A673 (cell line): ENCODE measurements at regions of chr5 and their contacts with region 1.

Region 1: GRCh38 chr5:77957931-77958521 is 181.9 kb upstream of the TBCA start:
- DNase-seq: peak; percentile 95
- H3K4me3 ChIP-seq: no peak overlapping the region
- H3K27ac ChIP-seq: no peak overlapping the region
- H3K4me1 ChIP-seq: peaks cover 12% of the 10 kb centered on the region
- H3K27me3 ChIP-seq: peaks cover 99% of the 10 kb centered on the region
- CTCF ChIP-seq: no peak

Region 2: GRCh38 chr5:77630258-77631089 is 327.6 kb before region 1 on chr5:
- CTCF ChIA-PET with region 1: no interaction called
- POLR2A ChIA-PET with region 1: no interaction called
- intact Hi-C with region 1: loop called (anchors 10 kb)
- DNase-seq: peak; percentile 69
- H3K4me3 ChIP-seq: peak overlapping the region; percentile 47
- H3K27ac ChIP-seq: no peak overlapping the region
- H3K4me1 ChIP-seq: peaks cover 3% of the 10 kb centered on the region
- H3K27me3 ChIP-seq: peaks cover 99% of the 10 kb centered on the region
- CTCF ChIP-seq: peak; percentile 38; the same call in 1 of the 2 replicates

Region 3: GRCh38 chr5:77718934-77719610 is 239.0 kb before region 1 on chr5:
- CTCF ChIA-PET with region 1: no interaction called
- POLR2A ChIA-PET with region 1: no interaction called
- intact Hi-C with region 1: no loop called
- DNase-seq: no peak
- H3K4me3 ChIP-seq: no peak overlapping the region
- H3K27ac ChIP-seq: no peak overlapping the region
- H3K4me1 ChIP-seq: peaks cover 4% of the 10 kb centered on the region
- H3K27me3 ChIP-seq: no peaks in the 10 kb centered on the region
- CTCF ChIP-seq: no peak

Region 4: DNA sequence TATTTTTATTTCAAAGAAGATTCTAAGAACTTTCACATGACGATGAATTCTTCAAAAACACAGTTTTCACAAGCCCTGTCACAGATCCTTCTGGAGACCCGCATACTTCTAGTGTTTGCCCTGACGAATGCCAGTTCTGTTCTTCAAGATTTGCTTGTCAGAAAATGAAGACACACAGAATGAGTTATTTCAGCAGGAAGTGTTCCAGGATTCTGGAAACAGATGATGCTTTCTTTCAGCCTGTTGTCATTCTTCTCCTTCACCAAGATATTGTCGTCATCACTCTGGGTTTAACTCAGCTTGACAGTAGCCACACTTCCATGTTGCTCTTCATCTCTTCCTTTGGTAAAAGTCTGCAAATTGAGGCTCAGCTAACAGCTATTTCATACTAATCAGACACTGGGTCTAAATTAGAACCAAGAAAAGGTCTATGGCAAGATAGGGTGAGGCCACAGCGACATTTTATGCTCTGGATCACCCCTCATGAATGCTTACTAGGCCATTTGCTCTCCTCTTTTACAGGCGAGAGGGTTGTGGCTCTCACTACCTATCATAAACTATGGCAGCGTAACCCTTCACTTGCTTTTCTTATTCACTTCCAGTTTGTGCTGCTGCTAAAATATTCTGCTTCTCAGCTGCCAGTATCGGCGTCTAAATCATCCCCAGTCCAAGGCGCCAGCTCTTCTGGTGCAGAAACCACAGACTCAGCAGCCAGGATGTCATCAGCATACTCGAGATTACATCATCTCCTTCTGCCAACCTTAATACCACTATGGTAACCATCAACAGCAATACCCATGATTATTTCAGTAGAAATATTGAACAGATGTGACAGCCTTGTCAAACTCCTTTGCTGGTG is 22.3 kb before region 1 on chr5:
- CTCF ChIA-PET with region 1: no interaction called
- POLR2A ChIA-PET with region 1: no interaction called
- intact Hi-C with region 1: no loop called
- DNase-seq: peak; percentile 19
- H3K4me3 ChIP-seq: no peak overlapping the region
- H3K27ac ChIP-seq: no peak overlapping the region
- H3K4me1 ChIP-seq: no peaks in the 10 kb centered on the region
- H3K27me3 ChIP-seq: peaks cover 89% of the 10 kb centered on the region
- CTCF ChIP-seq: no peak

Region 5: DNA sequence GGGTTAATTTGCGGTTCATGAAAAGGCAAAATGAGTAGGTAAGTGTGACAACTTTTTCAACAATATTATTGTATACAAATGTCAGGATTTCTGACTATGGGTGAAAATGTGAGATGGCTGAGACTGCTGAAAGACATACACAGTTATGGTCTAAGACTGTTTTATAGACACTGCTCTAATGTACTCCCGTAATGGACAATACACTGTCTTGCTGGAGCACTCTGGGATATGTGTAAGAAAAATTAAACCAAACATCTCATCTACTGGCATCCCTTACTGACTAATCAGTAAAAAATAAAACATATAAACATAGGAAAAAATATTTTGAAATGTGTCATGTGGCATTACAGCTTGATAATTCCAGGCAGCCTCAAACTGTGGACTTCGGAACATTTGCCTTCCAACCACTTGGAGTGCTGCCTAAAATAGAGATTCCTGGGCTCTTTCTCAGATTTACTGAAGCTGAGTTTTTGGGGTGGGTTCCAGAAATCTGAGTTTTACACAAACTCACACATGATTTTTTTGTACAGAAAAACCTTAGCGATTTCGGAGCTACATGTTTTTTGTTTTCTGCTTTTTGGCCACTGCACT is 52.0 kb after region 1 on chr5:
- CTCF ChIA-PET with region 1: no interaction called
- POLR2A ChIA-PET with region 1: no interaction called
- intact Hi-C with region 1: no loop called
- DNase-seq: no peak
- H3K4me3 ChIP-seq: no peak overlapping the region
- H3K27ac ChIP-seq: no peak overlapping the region
- H3K4me1 ChIP-seq: no peaks in the 10 kb centered on the region
- H3K27me3 ChIP-seq: no peaks in the 10 kb centered on the region
- CTCF ChIP-seq: no peak